ENCODE measurements at regions of chr21 and their contacts with region 1.

Region 1: DNA sequence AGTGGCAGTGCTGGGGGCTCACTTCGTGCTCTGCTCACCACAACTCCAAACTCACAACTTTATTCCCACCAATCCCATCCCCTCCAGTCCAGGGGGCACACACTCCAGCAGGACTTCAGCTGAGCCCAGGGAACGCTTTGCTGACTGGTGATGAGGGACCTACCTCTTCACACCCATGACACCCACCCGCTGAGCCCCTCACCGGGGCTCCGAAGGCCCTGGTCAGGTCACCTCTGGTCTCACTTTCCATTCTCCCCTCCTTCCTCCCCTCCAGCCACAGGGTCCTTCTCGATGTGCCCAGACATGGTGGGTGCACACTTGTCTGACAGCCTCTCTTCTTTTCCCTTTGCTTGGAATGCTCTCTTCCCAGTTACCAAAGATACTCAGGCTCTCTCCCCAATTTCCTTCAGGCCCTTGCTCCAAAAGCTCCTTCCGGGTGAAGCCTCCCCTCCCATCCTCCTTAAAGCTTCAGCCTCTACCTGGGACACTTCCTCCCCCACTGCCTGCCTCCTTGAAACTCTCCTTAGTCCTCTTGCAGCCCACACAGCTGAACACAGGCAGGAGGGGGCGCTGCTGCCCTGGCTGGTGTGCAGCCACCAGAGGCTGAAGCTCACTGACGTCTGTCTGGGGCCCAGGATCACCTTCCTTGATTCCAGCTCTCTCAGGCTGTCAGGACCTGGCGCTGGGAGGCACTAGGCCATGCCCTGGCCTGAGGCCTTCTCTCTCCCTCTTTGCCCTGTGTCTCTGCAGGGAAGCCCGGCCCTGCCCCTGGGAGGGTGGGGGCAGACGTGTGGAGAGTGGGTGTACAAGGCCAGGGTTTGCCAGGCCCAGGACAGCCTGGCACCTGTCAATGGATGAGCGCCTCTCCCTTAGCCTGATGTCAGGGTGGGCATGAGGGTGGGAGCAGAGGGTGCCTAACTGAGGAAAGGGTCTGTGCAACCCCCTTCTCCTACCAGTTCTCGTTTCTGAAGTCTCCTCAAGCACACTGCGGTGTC is 1.6 kb downstream of the KCNE1 start:
- DNase-seq: peak; percentile 45
- H3K4me3 ChIP-seq: no peak overlapping the region
- H3K27ac ChIP-seq: no peak overlapping the region
- H3K4me1 ChIP-seq: no peaks in the 10 kb centered on the region
- CTCF ChIP-seq: peak; percentile 75

Region 2: DNA sequence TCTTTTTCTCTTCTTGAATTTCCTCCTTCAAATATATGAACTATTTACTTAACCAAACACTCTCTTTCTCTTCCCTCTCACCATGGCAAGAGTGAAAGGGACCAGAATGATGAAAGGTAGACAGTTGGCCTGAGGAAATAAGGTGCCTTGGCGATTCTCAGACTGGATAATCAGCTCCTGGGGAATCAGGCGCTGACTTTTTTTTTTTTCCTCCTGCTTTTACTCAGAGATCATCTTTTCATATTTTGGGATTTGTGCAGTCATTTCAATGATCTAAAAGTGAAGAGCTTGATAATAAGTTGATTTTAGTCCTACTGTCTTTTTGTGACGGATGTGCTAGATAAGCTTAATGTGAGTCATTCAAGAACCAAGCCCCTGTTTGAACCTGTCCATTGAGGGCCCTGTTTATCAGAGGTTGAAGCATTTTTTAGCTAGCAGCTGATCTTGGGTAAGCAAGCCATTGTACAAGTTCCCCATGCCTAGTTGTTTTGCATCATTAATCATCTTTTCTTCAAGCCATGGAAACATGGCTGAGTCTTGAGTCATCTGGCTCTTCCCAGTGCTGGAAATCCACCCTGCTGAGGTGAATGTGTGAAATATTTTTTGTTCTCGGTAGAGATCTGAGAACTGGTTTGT is 827.3 kb before region 1 on chr21:
- CTCF ChIA-PET with region 1: no interaction called
- POLR2A ChIA-PET with region 1: no interaction called
- intact Hi-C with region 1: no loop called
- DNase-seq: no peak
- H3K4me3 ChIP-seq: no peak overlapping the region
- H3K27ac ChIP-seq: no peak overlapping the region
- H3K4me1 ChIP-seq: no peaks in the 10 kb centered on the region
- CTCF ChIP-seq: no peak

Region 3: DNA sequence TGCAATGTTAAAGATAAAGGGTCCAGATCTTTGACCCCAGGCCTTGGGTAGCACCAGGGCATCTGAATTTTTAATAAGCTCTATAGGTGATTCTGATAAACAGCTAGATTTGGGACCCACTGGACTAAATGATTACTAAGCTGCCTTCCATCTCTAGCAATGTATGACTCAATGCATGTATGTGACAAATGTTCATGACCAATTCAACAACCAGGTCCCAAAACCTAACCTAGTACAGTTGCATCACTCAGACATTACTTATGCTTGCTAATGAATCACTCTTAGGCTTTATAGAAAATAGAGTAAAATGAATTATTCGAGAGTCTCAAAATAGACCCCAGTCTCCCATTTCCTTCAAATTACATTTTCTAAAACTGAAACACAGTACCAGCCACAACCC is 69.0 kb after region 1 on chr21:
- CTCF ChIA-PET with region 1: no interaction called
- POLR2A ChIA-PET with region 1: no interaction called
- intact Hi-C with region 1: no loop called
- DNase-seq: no peak
- H3K4me3 ChIP-seq: no peak overlapping the region
- H3K27ac ChIP-seq: no peak overlapping the region
- H3K4me1 ChIP-seq: no peaks in the 10 kb centered on the region
- CTCF ChIP-seq: no peak

Region 4: GRCh38 chr21:34603002-34603709 is 92.7 kb after region 1 on chr21:
- CTCF ChIA-PET with region 1: interaction called, 8 read pairs
- POLR2A ChIA-PET with region 1: no interaction called
- intact Hi-C with region 1: loop called (anchors 1 kb)
- DNase-seq: peak; percentile 57
- H3K4me3 ChIP-seq: no peak overlapping the region
- H3K27ac ChIP-seq: no peak overlapping the region
- H3K4me1 ChIP-seq: no peaks in the 10 kb centered on the region
- CTCF ChIP-seq: peak; percentile 77

Region 5: GRCh38 chr21:34630536-34631143 is 120.2 kb after region 1 on chr21:
- CTCF ChIA-PET with region 1: no interaction called
- POLR2A ChIA-PET with region 1: no interaction called
- intact Hi-C with region 1: loop called (anchors 1 kb)
- DNase-seq: peak; percentile 64
- H3K4me3 ChIP-seq: no peak overlapping the region
- H3K27ac ChIP-seq: no peak overlapping the region
- H3K4me1 ChIP-seq: no peaks in the 10 kb centered on the region
- CTCF ChIP-seq: peak; percentile 95

Region 6: GRCh38 chr21:36035381-36035791 is 1524.9 kb after region 1 on chr21:
- CTCF ChIA-PET with region 1: no interaction called
- POLR2A ChIA-PET with region 1: no interaction called
- intact Hi-C with region 1: no loop called
- DNase-seq: no peak
- H3K4me3 ChIP-seq: no peak overlapping the region
- H3K27ac ChIP-seq: no peak overlapping the region
- H3K4me1 ChIP-seq: peaks cover 5% of the 10 kb centered on the region
- CTCF ChIP-seq: no peak